CD4-positive, alpha-beta T cell (primary cell): ENCODE measurements at regions of chr12 and their contacts with region 1.

Region 1: DNA sequence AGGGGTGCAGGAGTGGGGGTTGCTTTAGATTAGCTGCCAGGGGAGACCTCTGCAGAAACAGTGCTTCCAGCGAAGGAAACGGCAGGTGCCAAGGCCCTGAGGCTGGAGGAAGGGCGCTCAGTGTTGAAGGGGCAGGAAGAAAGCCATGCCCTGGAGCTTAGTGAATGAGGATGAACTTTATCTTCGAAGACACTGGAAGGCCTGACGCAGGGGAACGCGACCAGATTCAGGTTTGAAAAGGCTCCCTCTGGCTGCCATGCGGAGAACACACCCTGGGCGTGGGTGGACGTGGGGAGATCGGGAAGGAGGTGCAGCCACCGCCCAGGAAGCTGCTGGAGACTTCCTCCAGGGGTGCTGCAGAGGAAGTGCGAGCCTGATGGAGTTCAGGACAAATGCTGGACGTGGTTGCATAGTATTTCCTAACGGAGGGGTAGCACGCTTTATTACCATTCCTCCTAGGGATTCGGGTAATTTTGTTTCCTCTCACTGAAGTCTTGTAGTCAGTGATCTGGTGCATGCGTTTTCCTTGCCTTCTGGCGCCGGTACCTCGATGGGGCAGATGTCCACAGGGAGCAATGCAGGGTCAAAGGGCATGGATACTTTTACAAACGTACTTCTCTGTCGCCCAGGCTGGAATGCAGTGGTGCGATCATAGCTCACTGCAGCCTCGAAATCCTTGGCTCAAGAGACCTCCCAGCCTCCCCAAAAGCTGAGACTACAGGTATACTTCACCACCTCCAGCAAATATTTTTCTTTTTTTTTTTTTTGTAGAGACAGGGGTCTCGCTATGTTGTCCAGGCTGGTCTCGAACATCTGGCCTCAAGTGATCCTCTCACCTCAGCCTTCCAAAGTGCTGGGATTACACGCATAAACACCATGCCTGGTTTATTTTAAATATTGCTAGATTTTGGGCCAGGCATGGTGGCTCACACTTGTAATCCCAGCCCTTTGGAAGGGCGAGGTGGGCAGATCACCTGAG is 26.4 kb upstream of the UBC start:
- DNase-seq: peak; percentile 66 to 91 (median 76)
- ATAC-seq: peak; percentile 63
- H3K4me3 ChIP-seq: peak overlapping the region; percentile 70
- H3K4me3 Mint-ChIP-seq: no peak overlapping the region
- H3K27ac ChIP-seq: peak overlapping the region in 1 of 2 donors; percentile 9
- H3K27ac Mint-ChIP-seq: no peak overlapping the region
- H3K4me1 ChIP-seq: peaks cover 28% of the 10 kb centered on the region
- H3K4me1 Mint-ChIP-seq: peaks cover 5% of the 10 kb centered on the region
- H3K27me3 ChIP-seq: no peaks in the 10 kb centered on the region
- H3K27me3 Mint-ChIP-seq: no peaks in the 10 kb centered on the region
- CTCF ChIP-seq: peak; percentile 97

Region 2: GRCh38 chr12:124863416-124864325 is 77.2 kb before region 1 on chr12 and contains the start of gene SCARB1:
- CTCF ChIA-PET with region 1: no interaction called
- POLR2A ChIA-PET with region 1: no interaction called
- intact Hi-C with region 1: loop called in 1 of 2 experiments (anchors 5 kb)
- DNase-seq: peak; percentile 53 to 88 (median 71)
- ATAC-seq: peak; percentile 89
- H3K4me3 ChIP-seq: peak within 1 kb of the TSS; percentile 51
- H3K4me3 Mint-ChIP-seq: peak within 1 kb of the TSS; percentile 91
- H3K27ac ChIP-seq: no peak within 1 kb of the TSS
- H3K27ac Mint-ChIP-seq: peak within 1 kb of the TSS; percentile 76
- H3K4me1 ChIP-seq: peaks cover 18% of the 10 kb centered on the region
- H3K4me1 Mint-ChIP-seq: peaks cover 20% of the 10 kb centered on the region
- H3K27me3 ChIP-seq: no peaks in the 10 kb centered on the region
- H3K27me3 Mint-ChIP-seq: no peaks in the 10 kb centered on the region
- CTCF ChIP-seq: no peak
- total RNA-seq, gene SCARB1: 2.3 to 3.7 TPM

Region 3: GRCh38 chr12:124917135-124917840 is 23.6 kb before region 1 on chr12:
- CTCF ChIA-PET with region 1: interaction called, 120 read pairs
- POLR2A ChIA-PET with region 1: interaction called, 538 read pairs
- intact Hi-C with region 1: loop called (anchors 1 kb)
- DNase-seq: peak; percentile 82 to 98 (median 88)
- ATAC-seq: peak; percentile 78
- H3K4me3 ChIP-seq: peak overlapping the region; percentile 54
- H3K4me3 Mint-ChIP-seq: peak overlapping the region; percentile 86
- H3K27ac ChIP-seq: peak overlapping the region; percentile 84 to 97
- H3K27ac Mint-ChIP-seq: peak overlapping the region; percentile 99
- H3K4me1 ChIP-seq: peaks cover 78% of the 10 kb centered on the region
- H3K4me1 Mint-ChIP-seq: peaks cover 89% of the 10 kb centered on the region
- H3K27me3 ChIP-seq: no peaks in the 10 kb centered on the region
- H3K27me3 Mint-ChIP-seq: peaks cover 17% of the 10 kb centered on the region
- CTCF ChIP-seq: no peak

Region 4: GRCh38 chr12:124927201-124928094 is 13.4 kb before region 1 on chr12:
- CTCF ChIA-PET with region 1: interaction called, 32 read pairs
- POLR2A ChIA-PET with region 1: interaction called, 538 read pairs
- intact Hi-C with region 1: loop called (anchors 1 kb)
- DNase-seq: peak; percentile 81 to 95 (median 92)
- ATAC-seq: peak; percentile 90
- H3K4me3 ChIP-seq: peak overlapping the region; percentile 69
- H3K4me3 Mint-ChIP-seq: peak overlapping the region; percentile 95
- H3K27ac ChIP-seq: peak overlapping the region; percentile 66 to 67
- H3K27ac Mint-ChIP-seq: peak overlapping the region; percentile 98
- H3K4me1 ChIP-seq: peaks cover 24% of the 10 kb centered on the region
- H3K4me1 Mint-ChIP-seq: peaks cover 24% of the 10 kb centered on the region
- H3K27me3 ChIP-seq: no peaks in the 10 kb centered on the region
- H3K27me3 Mint-ChIP-seq: peaks cover 11% of the 10 kb centered on the region
- CTCF ChIP-seq: no peak